ENCODE measurements at regions of chr22 and their contacts with region 1.

Region 1: DNA sequence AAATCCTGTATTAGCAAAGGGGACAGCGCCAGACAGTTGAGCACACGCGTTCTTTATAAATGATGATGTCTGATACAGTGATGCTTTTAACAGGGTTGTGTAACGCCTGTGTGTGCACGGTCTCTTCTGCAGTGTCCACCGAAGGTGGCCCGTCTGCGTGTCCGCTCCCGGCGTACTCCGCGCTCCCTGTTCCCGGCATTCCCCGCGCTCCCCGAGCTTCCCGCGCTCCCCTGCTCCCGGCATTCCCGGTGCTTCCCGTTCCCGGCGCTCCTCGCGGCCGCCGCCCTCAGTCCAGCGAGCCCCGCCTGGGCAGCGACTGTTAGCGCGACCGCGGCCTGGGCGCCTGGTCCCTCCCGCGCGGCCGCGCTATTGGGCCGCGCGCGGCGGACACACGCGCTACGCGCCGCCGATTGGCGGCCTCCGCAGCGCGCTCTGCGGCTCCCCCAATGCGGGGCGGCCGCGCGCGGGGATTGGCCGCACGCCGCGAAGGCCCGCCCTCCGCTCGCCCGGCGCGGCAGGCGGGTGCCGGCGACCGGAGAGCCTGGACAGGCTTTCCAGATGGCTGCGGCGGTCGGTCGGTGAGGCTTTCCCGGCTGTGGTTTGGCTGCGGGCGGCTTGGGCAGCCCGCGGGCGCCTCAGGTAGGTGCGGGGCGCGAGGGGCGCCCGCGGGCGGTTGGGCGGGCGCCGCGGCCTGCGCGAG is at the start of gene DGCR8:
- DNase-seq: peak; percentile 86
- ATAC-seq: peak; percentile 87
- H3K4me3 ChIP-seq: peak within 1 kb of the TSS; percentile 66 to 87 (median 75)
- H3K27ac ChIP-seq: peak within 1 kb of the TSS; percentile 85
- H3K4me1 ChIP-seq: peaks cover 51% of the 10 kb centered on the region
- H3K27me3 ChIP-seq: no peaks in the 10 kb centered on the region; a peak in 2 of 5 replicates
- CTCF ChIP-seq: no peak; the same call in 1 of the 2 replicates
- EP300 ChIP-seq: peak in 1 of 2 experiments; percentile 45; a peak in 1 of 4 replicates
- POLR2A ChIP-seq: peak; percentile 90 to 95
- RAD21 ChIP-seq: peak; percentile 13; the same call in 1 of the 2 replicates
- total RNA-seq, gene DGCR8: 14.8 and 23.2 TPM in 2 replicates

Region 2: GRCh38 chr22:20016734-20017621 is 62.9 kb before region 1 on chr22 and contains the start of gene ARVCF:
- CTCF ChIA-PET with region 1: no interaction called
- POLR2A ChIA-PET with region 1: interaction called, 4 read pairs
- in situ Hi-C with region 1: no loop called
- intact Hi-C with region 1: loop called (anchors 10 kb)
- DNase-seq: peak; percentile 81
- ATAC-seq: peak; percentile 65
- H3K4me3 ChIP-seq: peak within 1 kb of the TSS; percentile 67 to 81 (median 81)
- H3K27ac ChIP-seq: peak within 1 kb of the TSS; percentile 38
- H3K4me1 ChIP-seq: peaks cover 63% of the 10 kb centered on the region
- H3K27me3 ChIP-seq: peaks cover 0 to 5% of the 10 kb centered on the region in 2 experiments; a peak in 2 of 5 replicates
- CTCF ChIP-seq: no peak; the same call in 1 of the 2 replicates
- EP300 ChIP-seq: no peak
- POLR2A ChIP-seq: peak in 1 of 2 experiments; percentile 70; a peak in 2 of 4 replicates
- RAD21 ChIP-seq: no peak
- total RNA-seq, gene ARVCF: 10.4 and 17.7 TPM in 2 replicates

Region 3: GRCh38 chr22:20130739-20131596 is 51.1 kb after region 1 on chr22:
- CTCF ChIA-PET with region 1: no interaction called
- POLR2A ChIA-PET with region 1: no interaction called
- in situ Hi-C with region 1: no loop called
- intact Hi-C with region 1: no loop called
- DNase-seq: peak; percentile 28
- ATAC-seq: peak; percentile 61
- H3K4me3 ChIP-seq: peak overlapping the region; percentile 73 to 86 (median 84)
- H3K27ac ChIP-seq: peak overlapping the region; percentile 63
- H3K4me1 ChIP-seq: peaks cover 45% of the 10 kb centered on the region
- H3K27me3 ChIP-seq: no peaks in the 10 kb centered on the region
- CTCF ChIP-seq: no peak
- EP300 ChIP-seq: no peak
- POLR2A ChIP-seq: peak in 1 of 2 experiments; percentile 46; a peak in 1 of 4 replicates
- RAD21 ChIP-seq: peak; percentile 19; the same call in 1 of the 2 replicates

Measured in HepG2 (cell line).